ENCODE measurements at regions of chr14 and their contacts with region 1.

Region 1: GRCh38 chr14:20469242-20469889 is at the start of gene PNP:
- DNase-seq: peak; percentile 93
- ATAC-seq: peak; percentile 93
- H3K4me3 Mint-ChIP-seq: peak within 1 kb of the TSS; percentile 87
- H3K27ac Mint-ChIP-seq: peak within 1 kb of the TSS; percentile 94
- H3K4me1 Mint-ChIP-seq: peaks cover 35% of the 10 kb centered on the region
- H3K27me3 Mint-ChIP-seq: no peaks in the 10 kb centered on the region
- total RNA-seq, gene PNP: 211 to 216 TPM

Region 2: GRCh38 chr14:20343092-20343861 is 126.1 kb before region 1 on chr14 and contains the start of gene PARP2:
- CTCF ChIA-PET with region 1: interaction called, 3 read pairs
- POLR2A ChIA-PET with region 1: interaction called, 11 read pairs
- DNase-seq: peak; percentile 95
- ATAC-seq: peak; percentile 94
- H3K4me3 Mint-ChIP-seq: peak within 1 kb of the TSS; percentile 93
- H3K27ac Mint-ChIP-seq: peak within 1 kb of the TSS; percentile 98
- H3K4me1 Mint-ChIP-seq: peaks cover 20% of the 10 kb centered on the region
- H3K27me3 Mint-ChIP-seq: peaks cover 5% of the 10 kb centered on the region
- total RNA-seq, gene PARP2: 29.7 to 32.3 TPM

Region 3: DNA sequence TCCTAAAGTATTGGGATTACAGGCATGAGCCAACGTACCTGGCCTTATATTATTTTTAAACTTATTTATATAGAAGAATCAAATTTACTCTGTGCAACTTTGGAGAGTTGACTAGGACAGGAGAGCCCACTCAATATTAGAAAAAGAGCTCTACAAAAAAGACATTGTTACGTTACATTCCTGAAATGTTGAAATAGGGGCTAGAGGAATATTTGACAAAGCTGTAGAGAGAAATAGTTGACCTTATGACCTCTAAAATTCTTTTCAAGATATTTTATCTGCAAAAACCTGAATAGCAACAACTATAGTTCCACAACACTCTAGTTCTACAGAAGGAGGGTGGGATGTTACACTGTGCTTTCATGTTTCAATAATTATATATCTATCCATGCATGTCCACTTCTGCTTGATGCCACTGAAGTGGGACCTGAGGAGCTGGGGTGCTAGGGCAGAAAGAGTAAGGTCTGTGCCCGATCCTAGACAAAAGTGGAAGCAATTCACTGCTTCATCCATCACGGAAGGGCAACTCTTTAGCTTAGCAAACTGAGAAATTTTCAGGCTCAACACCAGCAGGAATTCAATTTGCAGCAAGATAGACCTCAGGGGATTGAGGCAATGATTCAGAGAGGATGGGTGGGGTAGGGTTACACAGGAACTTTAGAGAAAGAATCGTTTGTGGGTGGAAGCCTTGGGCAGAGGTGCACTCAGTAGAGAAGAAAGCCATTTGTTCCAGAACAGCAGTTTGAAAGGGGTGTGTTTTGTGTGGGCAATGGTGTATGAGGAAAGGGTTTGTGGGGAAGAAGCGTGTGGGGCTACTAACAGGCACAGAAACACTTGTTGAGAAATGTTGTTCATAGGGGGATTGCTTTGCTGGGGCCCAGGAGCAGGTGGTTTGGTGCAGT is 20.0 kb after region 1 on chr14:
- CTCF ChIA-PET with region 1: interaction called, 4 read pairs
- POLR2A ChIA-PET with region 1: interaction called, 27 read pairs
- DNase-seq: peak; percentile 45
- ATAC-seq: peak; percentile 70
- H3K4me3 Mint-ChIP-seq: peak overlapping the region; percentile 30
- H3K27ac Mint-ChIP-seq: peak overlapping the region; percentile 89
- H3K4me1 Mint-ChIP-seq: peaks cover 76% of the 10 kb centered on the region
- H3K27me3 Mint-ChIP-seq: peaks cover 1% of the 10 kb centered on the region